Right ventricle myocardium superior (tissue), 1 donor: ENCODE measurements at regions of chr20 and their contacts with region 1.

Region 1: GRCh38 chr20:62500237-62500864 is 24.6 kb upstream of the GATA5 start:
- DNase-seq: peak; percentile 89
- ATAC-seq: peak; percentile 86

Region 2: DNA sequence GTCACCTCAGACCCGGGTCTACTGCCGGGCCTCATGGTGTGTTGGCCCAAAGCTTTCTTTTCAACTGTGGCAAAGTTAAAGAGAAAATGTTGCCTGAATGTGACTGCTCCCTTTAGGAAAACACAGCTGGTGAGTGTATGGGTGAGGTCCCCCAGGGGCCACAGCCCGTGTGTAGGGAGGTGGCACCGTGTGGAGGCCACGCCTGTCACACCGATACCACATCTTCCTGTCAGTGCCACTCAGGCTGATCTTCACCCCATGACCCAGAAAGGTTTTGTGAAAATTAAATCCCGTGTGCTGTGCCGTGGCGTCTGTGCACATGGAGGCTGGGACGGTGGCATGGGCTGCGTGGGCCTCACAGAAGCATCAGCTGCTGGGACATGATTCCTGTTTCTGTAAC is 208.2 kb before region 1 on chr20:
- intact Hi-C with region 1: loop called (anchors 10 kb)
- DNase-seq: no peak
- ATAC-seq: no peak

Region 3: GRCh38 chr20:62567246-62568002 is 67.1 kb after region 1 on chr20:
- intact Hi-C with region 1: loop called (anchors 5 kb)
- DNase-seq: no peak
- ATAC-seq: no peak

Region 4: GRCh38 chr20:62616728-62617621 is 116.6 kb after region 1 on chr20:
- intact Hi-C with region 1: loop called (anchors 5 kb)
- DNase-seq: peak; percentile 88
- ATAC-seq: peak; percentile 87

Region 5: GRCh38 chr20:62786157-62786556 is 285.8 kb after region 1 on chr20:
- intact Hi-C with region 1: loop called (anchors 5 kb)
- DNase-seq: no peak
- ATAC-seq: no peak

Region 6: GRCh38 chr20:62926239-62927104 is 426.1 kb after region 1 on chr20 and contains the start of gene DIDO1:
- intact Hi-C with region 1: no loop called
- DNase-seq: peak; percentile 93
- ATAC-seq: peak; percentile 92
- total RNA-seq, gene DIDO1: 32.3 TPM